ENCODE measurements at regions of chr7 and their contacts with region 1.

Region 1: GRCh38 chr7:32536585-32536984 is 41.3 kb downstream of the AVL9 start:
- DNase-seq: no peak
- H3K4me3 ChIP-seq: no peak overlapping the region
- H3K27ac ChIP-seq: no peak overlapping the region
- H3K4me1 ChIP-seq: peaks cover 0 to 14% of the 10 kb centered on the region in 2 donors
- H3K27me3 ChIP-seq: no peaks in the 10 kb centered on the region
- CTCF ChIP-seq: no peak

Region 2: DNA sequence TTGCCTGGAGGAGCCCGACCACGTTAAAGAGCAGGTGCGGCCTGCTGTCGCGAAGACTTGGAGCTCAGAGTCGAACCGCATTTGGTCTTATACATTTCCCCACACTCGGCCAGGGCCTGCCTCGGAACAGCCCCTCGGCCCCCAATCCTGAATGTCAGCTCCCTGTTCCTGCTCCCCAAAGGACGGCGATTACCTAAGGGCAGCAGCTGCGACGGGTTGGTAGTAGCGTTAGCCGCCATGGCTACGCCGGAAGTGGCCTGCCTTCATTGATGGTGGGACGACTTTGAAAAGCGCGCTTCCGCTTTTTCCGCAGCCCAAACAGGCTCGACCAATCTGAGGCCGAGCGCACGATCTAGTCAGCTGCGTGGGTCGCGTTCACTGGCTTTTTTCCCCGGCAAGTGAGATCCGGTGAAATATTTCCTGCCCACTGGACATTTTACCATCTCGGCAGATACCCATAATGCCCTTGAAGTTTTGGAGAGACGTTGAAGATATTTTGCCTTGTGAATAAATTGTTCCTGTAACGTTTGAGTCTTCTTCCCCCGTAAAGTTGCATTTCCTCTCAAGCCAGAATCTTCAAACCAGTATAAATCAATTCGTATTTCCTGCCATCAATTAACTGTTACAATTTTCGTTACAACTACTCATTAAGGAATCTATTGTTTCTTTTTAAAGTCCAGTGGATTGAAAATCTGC is 46.3 kb before region 1 on chr7 and contains the start of gene LSM5:
- intact Hi-C with region 1: loop called (anchors 5 kb)
- DNase-seq: peak; percentile 49 to 95
- H3K4me3 ChIP-seq: peak within 1 kb of the TSS; percentile 73 to 96
- H3K27ac ChIP-seq: peak within 1 kb of the TSS; percentile 80 to 85
- H3K4me1 ChIP-seq: peaks cover 6 to 9% of the 10 kb centered on the region in 2 donors
- H3K27me3 ChIP-seq: no peaks in the 10 kb centered on the region
- CTCF ChIP-seq: no peak
- total RNA-seq, gene LSM5: 20.5 TPM